HEK293T (cell line): ENCODE measurements at regions of chr4 and their contacts with region 1.

Region 1: GRCh38 chr4:153142700-153143438 is 61.4 kb upstream of the TRIM2 start:
- DNase-seq: peak; percentile 77

Region 2: DNA sequence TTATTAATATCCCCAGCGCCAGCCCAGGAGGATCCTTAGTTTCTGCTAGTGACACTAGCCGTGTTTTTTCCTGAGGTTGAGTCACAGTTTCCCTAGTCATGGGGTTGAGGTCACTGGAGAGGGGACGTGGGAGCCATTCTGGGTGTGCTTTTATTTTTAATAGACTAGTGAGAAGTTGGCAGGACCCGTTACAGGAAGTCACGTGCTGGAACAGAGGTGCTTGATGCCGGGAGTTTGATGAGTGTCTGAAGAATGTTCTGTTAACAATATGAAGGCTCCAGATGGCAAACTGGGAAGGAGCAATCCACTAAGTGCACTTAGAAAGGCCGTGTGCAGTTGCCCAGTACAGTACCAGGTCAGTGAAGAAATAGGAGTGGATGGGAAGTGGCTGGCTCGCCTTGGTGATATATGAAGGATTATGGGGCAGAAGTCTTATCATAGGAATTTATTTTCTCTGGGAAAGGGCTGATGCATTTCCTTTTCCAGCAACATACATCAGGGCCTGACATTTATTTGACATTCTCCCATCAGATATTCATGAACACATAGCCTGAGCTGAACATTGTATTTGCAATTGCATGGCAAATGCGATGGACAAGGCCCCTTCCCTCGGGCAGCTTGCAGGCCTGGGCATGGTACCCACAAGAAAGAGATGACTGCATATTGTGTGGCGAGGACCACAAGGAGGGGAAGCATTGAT is 898.8 kb before region 1 on chr4:
- CTCF ChIA-PET with region 1: no interaction called
- POLR2A ChIA-PET with region 1: no interaction called
- DNase-seq: no peak

Region 3: GRCh38 chr4:153204247-153205027 is 61.6 kb after region 1 on chr4 and contains the start of gene TRIM2:
- CTCF ChIA-PET with region 1: interaction called, 17 read pairs
- POLR2A ChIA-PET with region 1: no interaction called
- DNase-seq: peak; percentile 56

Region 4: DNA sequence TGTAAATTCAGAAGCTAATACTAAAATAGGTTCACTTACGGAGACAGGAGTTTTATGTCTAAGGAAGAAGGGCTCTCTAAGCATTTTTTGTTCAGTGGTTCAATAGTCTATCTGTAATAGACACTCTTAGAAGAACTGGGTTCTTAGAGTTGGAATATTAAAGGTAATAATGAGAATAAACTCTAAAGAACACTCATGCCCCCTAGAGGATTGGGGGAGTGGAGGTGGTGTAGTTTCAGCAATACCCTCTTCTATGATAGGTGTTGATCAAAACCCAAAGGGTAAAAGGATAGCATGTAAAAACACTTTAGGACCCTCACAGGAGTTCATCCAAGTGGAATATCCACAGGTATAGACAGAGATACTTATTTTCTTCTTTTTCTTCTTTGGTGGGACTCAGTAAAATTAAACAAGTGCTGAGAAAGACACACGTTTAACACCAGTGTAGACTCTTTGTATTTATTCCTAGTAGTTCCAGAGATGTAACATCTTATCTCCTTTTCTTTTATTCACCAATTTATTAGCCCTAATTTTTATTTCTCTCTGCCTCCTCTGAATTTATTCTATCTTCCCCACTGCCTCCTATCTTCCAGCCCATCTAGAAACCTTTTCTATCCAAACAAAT is 175.9 kb after region 1 on chr4:
- CTCF ChIA-PET with region 1: interaction called, 10 read pairs
- POLR2A ChIA-PET with region 1: no interaction called
- DNase-seq: peak; percentile 55